ENCODE measurements at regions of chr14 and their contacts with region 1.

Region 1: GRCh38 chr14:77053046-77053841 is 24.7 kb upstream of the IRF2BPL start:
- DNase-seq: peak; percentile 85
- ATAC-seq: peak; percentile 96
- H3K4me3 Mint-ChIP-seq: no peak overlapping the region
- H3K27ac Mint-ChIP-seq: peak overlapping the region; percentile 68
- H3K4me1 Mint-ChIP-seq: peaks cover 28% of the 10 kb centered on the region
- H3K27me3 Mint-ChIP-seq: no peaks in the 10 kb centered on the region

Region 2: GRCh38 chr14:76904740-76905438 is 148.4 kb before region 1 on chr14:
- CTCF ChIA-PET with region 1: interaction called, 89 read pairs
- POLR2A ChIA-PET with region 1: no interaction called
- DNase-seq: peak; percentile 75
- ATAC-seq: peak; percentile 59
- H3K4me3 Mint-ChIP-seq: no peak overlapping the region
- H3K27ac Mint-ChIP-seq: peak overlapping the region; percentile 50
- H3K4me1 Mint-ChIP-seq: peaks cover 42% of the 10 kb centered on the region
- H3K27me3 Mint-ChIP-seq: no peaks in the 10 kb centered on the region

Region 3: GRCh38 chr14:76936483-76936882 is 116.8 kb before region 1 on chr14:
- CTCF ChIA-PET with region 1: no interaction called
- POLR2A ChIA-PET with region 1: no interaction called
- DNase-seq: no peak
- ATAC-seq: no peak
- H3K4me3 Mint-ChIP-seq: no peak overlapping the region
- H3K27ac Mint-ChIP-seq: peak overlapping the region; percentile 43
- H3K4me1 Mint-ChIP-seq: peaks cover 18% of the 10 kb centered on the region
- H3K27me3 Mint-ChIP-seq: no peaks in the 10 kb centered on the region

Region 4: DNA sequence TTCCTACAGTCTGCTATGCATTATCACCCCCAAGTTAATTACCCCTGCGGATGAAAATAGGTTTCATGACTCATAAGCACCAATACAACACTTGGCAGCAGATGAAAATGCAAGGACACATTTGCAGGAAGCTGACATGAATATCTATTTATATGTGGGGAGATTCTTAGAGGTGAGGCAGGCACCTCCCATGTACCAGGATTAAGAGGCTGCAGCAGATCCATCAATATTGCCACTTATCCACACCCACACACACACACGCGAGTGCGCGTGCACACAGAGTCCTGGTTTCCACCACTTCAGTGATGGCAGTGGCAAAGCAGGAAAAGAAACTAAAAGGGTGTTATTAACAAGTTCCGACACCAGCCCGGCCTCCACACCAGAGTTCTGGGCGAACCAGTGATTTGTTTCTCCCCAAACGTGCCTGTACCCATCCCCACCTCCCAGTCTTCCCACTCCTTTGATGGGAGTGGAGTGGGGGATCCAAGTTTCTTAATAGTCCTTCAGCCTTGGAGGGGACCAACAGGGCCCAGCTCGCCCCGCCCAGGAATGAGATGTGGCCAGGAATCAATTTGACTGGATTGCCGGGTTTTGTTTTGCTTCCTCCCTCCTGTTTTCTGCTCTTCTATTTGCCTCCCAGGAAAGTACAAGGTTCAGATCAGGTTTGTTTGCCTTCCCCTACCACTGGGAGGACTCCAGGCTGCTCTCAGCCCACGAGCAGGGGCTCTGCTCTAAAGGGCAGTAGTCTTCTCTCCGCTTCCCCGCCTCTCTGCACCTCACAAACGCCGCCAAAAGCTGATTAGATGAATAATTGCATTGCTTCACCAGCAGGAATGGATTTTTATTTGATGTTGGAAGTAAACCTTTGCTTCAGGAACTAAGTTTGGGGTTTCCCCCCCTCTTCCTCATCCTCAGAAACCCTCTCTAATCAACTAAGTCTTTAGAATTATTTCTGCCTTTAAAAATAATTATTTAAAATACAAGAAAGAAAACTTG is 29.9 kb before region 1 on chr14:
- CTCF ChIA-PET with region 1: interaction called, 24 read pairs
- POLR2A ChIA-PET with region 1: interaction called, 3 read pairs
- DNase-seq: no peak
- ATAC-seq: no peak
- H3K4me3 Mint-ChIP-seq: peak overlapping the region; percentile 10
- H3K27ac Mint-ChIP-seq: peak overlapping the region; percentile 74
- H3K4me1 Mint-ChIP-seq: peaks cover 44% of the 10 kb centered on the region
- H3K27me3 Mint-ChIP-seq: no peaks in the 10 kb centered on the region

Region 5: DNA sequence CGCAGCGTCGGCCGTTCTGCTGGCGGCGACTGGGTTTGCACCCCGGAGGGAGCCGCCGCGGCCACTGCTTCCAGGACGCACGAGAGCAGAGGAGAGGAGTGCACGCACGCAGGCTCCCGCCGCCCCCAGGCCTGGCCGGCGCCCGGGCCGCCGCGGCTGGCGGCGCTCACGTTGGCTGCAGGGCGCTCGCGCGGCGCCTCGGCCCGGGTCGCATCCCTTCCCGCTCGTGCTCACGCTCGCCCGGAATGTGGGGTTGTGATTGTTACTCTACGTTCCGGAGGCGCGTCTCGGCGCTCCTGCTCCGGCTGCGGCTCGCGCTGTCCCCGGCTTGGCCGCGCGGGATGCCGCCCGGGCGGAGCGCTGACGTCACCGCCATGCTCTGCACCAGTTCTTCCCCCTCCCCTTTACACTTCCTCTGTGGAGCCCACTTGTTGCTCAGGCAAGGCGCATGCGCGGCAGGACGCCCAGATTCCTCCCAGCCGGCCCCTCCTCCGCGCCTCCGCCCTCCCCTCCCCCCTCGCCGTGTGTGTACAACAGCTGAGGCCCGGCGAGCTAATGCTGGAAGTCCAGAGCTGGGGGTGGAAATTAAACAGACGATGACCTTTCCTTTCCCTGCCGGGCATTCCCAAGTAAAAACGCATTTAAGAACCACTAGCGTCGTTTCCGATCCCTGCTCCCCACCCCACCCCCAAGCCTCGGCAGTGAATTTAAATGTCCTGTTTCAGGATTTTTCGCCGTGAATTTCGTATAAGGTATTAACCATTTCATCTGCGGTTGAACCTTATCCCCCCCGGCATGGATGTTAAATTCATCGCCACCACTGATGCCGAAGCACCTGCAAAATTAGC is 24.6 kb before region 1 on chr14 and contains the start of gene IRF2BPL:
- CTCF ChIA-PET with region 1: interaction called, 24 read pairs
- POLR2A ChIA-PET with region 1: interaction called, 3 read pairs
- DNase-seq: peak; percentile 96
- ATAC-seq: peak; percentile 76
- H3K4me3 Mint-ChIP-seq: peak within 1 kb of the TSS; percentile 94
- H3K27ac Mint-ChIP-seq: peak within 1 kb of the TSS; percentile 88
- H3K4me1 Mint-ChIP-seq: peaks cover 63% of the 10 kb centered on the region
- H3K27me3 Mint-ChIP-seq: no peaks in the 10 kb centered on the region
- total RNA-seq, gene IRF2BPL: 34.5 to 35.6 TPM

Region 6: GRCh38 chr14:77040059-77040740 is 13.0 kb before region 1 on chr14:
- CTCF ChIA-PET with region 1: interaction called, 21 read pairs
- POLR2A ChIA-PET with region 1: interaction called, 7 read pairs
- DNase-seq: peak; percentile 94
- ATAC-seq: peak; percentile 72
- H3K4me3 Mint-ChIP-seq: peak overlapping the region; percentile 76
- H3K27ac Mint-ChIP-seq: peak overlapping the region; percentile 97
- H3K4me1 Mint-ChIP-seq: peaks cover 89% of the 10 kb centered on the region
- H3K27me3 Mint-ChIP-seq: no peaks in the 10 kb centered on the region

Measured in activated CD8-positive, alpha-beta T cell treated with anti-CD3 and anti-CD28 coated beads, Interleukin-2, amount 10 ng/mL, durations not matched to agents 7 days and 5 days (primary cell).